CD14-positive monocyte (primary cell): ENCODE measurements at regions of chr9 and their contacts with region 1.

Region 1: GRCh38 chr9:127869310-127870152 is 7.9 kb downstream of the AK1 start:
- DNase-seq: peak; percentile 81 to 88 (median 86)
- H3K4me3 ChIP-seq: no peak overlapping the region
- H3K4me3 Mint-ChIP-seq: peak overlapping the region in 1 of 2 donors; percentile 11
- H3K27ac ChIP-seq: no peak overlapping the region
- H3K27ac Mint-ChIP-seq: peak overlapping the region in 4 of 7 donors; percentile 32 to 66 (median 61)
- H3K4me1 ChIP-seq: peaks cover 16 to 22% of the 10 kb centered on the region in 2 donors
- H3K4me1 Mint-ChIP-seq: peaks cover 21% of the 10 kb centered on the region
- H3K27me3 ChIP-seq: no peaks in the 10 kb centered on the region
- H3K27me3 Mint-ChIP-seq: peaks cover 0 to 2% (median 2%) of the 10 kb centered on the region in 3 donors
- CTCF ChIP-seq: peak; percentile 96

Region 2: DNA sequence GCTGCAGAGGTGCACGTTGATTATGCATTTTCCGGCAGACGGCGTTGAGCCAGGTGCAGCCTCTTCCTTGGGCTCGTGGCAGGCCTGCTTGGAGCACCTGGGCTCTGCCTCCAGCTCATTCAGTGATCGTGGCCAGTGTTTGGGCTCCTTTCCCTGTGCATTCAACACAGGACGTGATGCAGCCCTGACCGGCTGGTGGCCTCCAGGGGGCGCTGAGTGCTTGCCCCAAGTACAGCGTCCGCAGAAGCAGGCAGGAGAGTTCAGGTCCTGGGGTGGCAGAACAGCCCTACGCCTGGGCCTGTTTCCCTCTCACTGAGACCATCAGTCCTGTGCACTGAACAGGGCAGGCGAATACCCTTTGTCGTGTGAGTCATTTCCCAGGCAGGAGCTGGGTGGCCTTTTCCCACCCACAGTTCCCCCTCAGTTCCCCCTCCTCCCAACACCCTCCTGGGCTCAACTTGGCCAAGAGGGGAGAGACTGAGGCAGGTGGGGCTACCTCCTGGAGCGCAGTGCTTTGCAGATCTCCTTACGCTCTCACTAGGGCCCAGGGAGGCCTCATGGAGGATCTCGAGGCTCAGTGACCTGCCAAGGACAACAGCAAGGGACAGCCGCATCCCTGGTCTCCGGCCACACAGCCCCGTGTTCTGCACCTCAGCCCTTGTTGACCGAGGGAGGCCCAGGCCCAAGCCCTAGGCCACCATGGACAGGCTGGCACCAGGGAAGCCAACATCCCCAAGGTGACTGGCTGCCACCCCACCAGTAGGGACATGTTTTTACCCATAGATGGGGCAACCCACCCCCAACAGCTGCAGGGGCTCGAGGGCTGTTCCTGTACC is 365.4 kb before region 1 on chr9:
- intact Hi-C with region 1: loop called in 1 of 2 experiments (anchors 10 kb)
- DNase-seq: peak; percentile 73 to 80 (median 79)
- H3K4me3 ChIP-seq: no peak overlapping the region
- H3K4me3 Mint-ChIP-seq: no peak overlapping the region
- H3K27ac ChIP-seq: peak overlapping the region; percentile 2 to 50
- H3K27ac Mint-ChIP-seq: peak overlapping the region in 5 of 7 donors; percentile 5 to 48 (median 46)
- H3K4me1 ChIP-seq: no peaks in the 10 kb centered on the region
- H3K4me1 Mint-ChIP-seq: no peaks in the 10 kb centered on the region
- H3K27me3 ChIP-seq: no peaks in the 10 kb centered on the region
- H3K27me3 Mint-ChIP-seq: peaks cover 0 to 4% (median 2%) of the 10 kb centered on the region in 3 donors
- CTCF ChIP-seq: peak; percentile 90

Region 3: GRCh38 chr9:127763918-127764384 is 105.6 kb before region 1 on chr9:
- intact Hi-C with region 1: loop called in 1 of 2 experiments (anchors 2 kb)
- DNase-seq: peak; percentile 63 to 68 (median 66)
- H3K4me3 ChIP-seq: no peak overlapping the region
- H3K4me3 Mint-ChIP-seq: no peak overlapping the region
- H3K27ac ChIP-seq: peak overlapping the region; percentile 30 to 66
- H3K27ac Mint-ChIP-seq: peak overlapping the region; percentile 4 to 83 (median 77)
- H3K4me1 ChIP-seq: peaks cover 41 to 54% of the 10 kb centered on the region in 2 donors
- H3K4me1 Mint-ChIP-seq: peaks cover 68% of the 10 kb centered on the region
- H3K27me3 ChIP-seq: no peaks in the 10 kb centered on the region
- H3K27me3 Mint-ChIP-seq: no peaks in the 10 kb centered on the region
- CTCF ChIP-seq: peak; percentile 73

Region 4: DNA sequence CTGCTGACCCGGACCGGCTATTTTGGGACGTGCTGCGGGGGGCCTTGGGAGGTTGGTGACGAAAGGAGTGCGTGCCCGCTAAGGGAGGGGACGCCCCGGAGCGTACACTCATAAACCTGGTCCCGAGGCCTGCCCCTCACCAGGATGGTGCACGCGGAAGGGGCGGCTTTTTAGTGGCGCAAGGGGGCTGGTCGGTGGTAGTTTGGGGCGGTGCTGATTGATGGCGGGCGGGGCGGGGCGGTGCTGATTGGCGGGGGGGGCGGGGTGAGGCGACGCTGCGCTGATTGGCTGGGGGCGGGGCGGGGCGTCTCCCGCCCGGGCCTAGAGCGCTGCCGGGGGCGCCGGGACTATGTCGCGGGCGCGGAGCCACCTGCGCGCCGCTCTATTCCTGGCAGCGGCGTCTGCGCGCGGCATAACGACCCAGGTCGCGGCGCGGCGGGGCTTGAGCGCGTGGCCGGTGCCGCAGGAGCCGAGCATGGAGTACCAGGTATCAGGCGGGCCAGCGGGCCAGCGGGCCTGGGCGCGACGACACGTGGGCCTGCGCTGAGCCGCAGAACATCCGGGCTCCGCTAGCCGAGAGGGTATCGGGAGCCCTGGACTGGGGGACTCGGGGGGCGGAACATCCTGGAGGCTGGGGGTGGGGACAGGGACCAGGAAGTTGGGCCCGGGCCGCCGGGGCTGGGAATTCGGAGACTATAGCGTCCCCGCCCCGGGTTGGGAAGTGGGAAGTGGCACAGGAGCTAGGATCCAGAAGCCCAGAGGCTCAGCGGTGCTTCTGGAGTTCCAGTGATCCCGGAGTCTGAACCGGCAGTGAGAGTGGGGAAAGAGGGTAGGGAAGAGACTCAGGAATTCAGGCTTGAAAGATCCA is 66.7 kb before region 1 on chr9 and contains the start of gene FPGS:
- intact Hi-C with region 1: loop called in 1 of 2 experiments (anchors 5 kb)
- DNase-seq: peak; percentile 71 to 92 (median 87)
- H3K4me3 ChIP-seq: peak within 1 kb of the TSS; percentile 67 to 92 (median 72)
- H3K4me3 Mint-ChIP-seq: peak within 1 kb of the TSS; percentile 94
- H3K27ac ChIP-seq: peak within 1 kb of the TSS; percentile 92 to 94
- H3K27ac Mint-ChIP-seq: peak within 1 kb of the TSS; percentile 89 to 97 (median 94)
- H3K4me1 ChIP-seq: peaks cover 33 to 37% of the 10 kb centered on the region in 2 donors
- H3K4me1 Mint-ChIP-seq: peaks cover 33% of the 10 kb centered on the region
- H3K27me3 ChIP-seq: no peaks in the 10 kb centered on the region
- H3K27me3 Mint-ChIP-seq: peaks cover 0 to 5% (median 2%) of the 10 kb centered on the region in 3 donors
- CTCF ChIP-seq: no peak
- polyA plus RNA-seq, gene FPGS: 21.3 to 28.5 (median 25.2) TPM

Region 5: DNA sequence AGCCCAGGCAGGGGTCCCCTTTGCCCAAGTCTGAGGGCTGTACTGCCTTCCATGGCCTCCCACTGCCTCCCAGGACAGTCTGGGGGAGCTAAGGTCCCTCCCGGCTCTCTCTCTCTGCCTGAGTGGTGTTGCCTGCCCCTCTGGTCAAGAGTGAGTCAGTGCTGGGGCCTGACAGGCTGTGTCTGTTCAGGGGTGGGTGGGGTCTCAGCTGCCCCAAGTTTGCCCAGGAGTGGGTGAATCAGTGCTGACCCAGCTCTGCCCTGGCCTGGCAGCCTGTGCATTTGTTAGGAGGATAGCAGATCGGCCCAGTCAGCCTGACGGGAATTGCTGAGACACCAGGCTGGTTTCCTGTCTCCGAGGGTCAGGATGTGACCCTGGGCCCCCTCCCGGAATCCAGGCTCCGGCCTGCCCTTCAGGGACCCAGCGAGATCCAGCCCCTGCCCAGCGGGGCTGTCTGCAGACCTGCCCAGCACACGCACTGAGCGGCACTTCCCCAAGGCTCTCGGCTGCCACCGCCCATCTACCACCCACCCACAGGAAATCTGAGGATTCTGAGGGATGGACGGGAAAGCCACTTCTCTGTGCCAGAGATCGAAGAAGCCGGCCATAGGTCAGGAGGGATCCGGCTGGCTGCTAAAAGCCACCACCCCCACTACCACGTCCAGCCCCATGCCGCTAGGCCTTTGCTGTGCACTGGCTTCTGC is 31.0 kb before region 1 on chr9:
- intact Hi-C with region 1: no loop called
- DNase-seq: peak; percentile 82 to 94 (median 92)
- H3K4me3 ChIP-seq: no peak overlapping the region
- H3K4me3 Mint-ChIP-seq: no peak overlapping the region
- H3K27ac ChIP-seq: peak overlapping the region in 1 of 2 donors; percentile 55
- H3K27ac Mint-ChIP-seq: peak overlapping the region in 6 of 7 donors; percentile 57 to 99 (median 78)
- H3K4me1 ChIP-seq: peaks cover 38 to 39% of the 10 kb centered on the region in 2 donors
- H3K4me1 Mint-ChIP-seq: peaks cover 44% of the 10 kb centered on the region
- H3K27me3 ChIP-seq: no peaks in the 10 kb centered on the region
- H3K27me3 Mint-ChIP-seq: peaks cover 2 to 6% (median 5%) of the 10 kb centered on the region in 3 donors
- CTCF ChIP-seq: no peak